Gastrocnemius medialis (tissue), 4 donors: ENCODE measurements at regions of chr22 and their contacts with region 1.

Region 1: GRCh38 chr22:19291580-19292457 is at the start of gene CLTCL1:
- DNase-seq: peak; percentile 81 to 84
- ATAC-seq: peak; percentile 0 to 3
- H3K4me3 ChIP-seq: peak within 1 kb of the TSS; percentile 86 to 98 (median 96)
- H3K27ac ChIP-seq: peak within 1 kb of the TSS; percentile 96 to 100 (median 97)
- H3K4me1 ChIP-seq: peaks cover 39 to 53% of the 10 kb centered on the region in 2 donors
- H3K27me3 ChIP-seq: no peaks in the 10 kb centered on the region
- CTCF ChIP-seq: no peak
- POLR2A ChIP-seq: peak; percentile 92 to 94
- total RNA-seq, gene CLTCL1: 111 to 311 (median 215) TPM

Region 2: GRCh38 chr22:18110194-18110953 is 1181.4 kb before region 1 on chr22 and contains the start of gene TUBA8:
- in situ Hi-C with region 1: no loop called
- intact Hi-C with region 1: loop called (anchors 10 kb)
- DNase-seq: peak; percentile 71 to 84
- ATAC-seq: peak; percentile 65 to 71
- H3K4me3 ChIP-seq: peak within 1 kb of the TSS; percentile 60 to 71 (median 64)
- H3K27ac ChIP-seq: peak within 1 kb of the TSS; percentile 87 to 97 (median 94)
- H3K4me1 ChIP-seq: peaks cover 46 to 50% of the 10 kb centered on the region in 2 donors
- H3K27me3 ChIP-seq: no peaks in the 10 kb centered on the region
- CTCF ChIP-seq: peak in 1 of 5 experiments; percentile 23
- POLR2A ChIP-seq: peak; percentile 93 to 95
- total RNA-seq, gene TUBA8: 57.8 to 114 (median 77.7) TPM

Region 3: DNA sequence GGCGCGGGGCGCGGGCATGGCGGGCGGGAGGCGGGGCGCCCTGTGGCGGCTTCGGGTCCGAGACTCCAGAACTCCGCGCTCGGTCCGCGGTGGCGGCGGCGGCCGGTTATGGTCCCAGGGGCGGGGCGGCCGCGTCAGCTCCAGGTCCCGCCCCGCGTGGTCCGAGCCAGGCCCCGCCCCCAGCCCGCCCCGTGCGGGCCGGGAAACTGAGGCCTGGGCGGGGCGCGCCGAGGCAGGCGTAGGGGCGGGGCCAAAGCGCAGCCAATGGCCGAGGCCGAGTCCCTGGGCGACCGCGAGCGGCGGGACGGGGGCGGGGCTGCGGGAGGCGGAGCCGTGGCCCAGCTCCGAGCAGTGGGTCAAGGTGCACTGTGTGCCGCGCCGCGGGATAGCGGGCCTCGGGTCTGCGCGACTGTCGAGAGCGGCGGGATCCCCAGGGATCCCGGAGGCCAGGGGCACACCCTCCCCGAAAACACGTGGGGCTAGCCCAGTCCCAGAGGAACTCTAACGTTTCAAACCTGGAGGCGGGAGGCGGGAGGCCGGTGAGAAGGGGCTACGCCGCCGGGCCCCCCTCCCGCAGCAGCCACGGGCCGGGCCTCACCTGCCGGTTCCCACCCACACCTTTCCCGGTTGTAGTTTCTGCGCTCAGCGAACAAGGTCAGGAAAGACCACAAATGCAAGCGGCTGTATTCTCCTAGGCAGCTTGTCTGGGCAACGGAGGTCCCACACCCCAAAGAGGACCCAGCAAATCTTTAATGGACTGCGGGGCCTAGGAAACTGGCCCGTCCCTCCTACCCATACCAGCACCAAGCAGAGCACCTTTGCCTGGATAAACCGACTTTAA is 112.9 kb before region 1 on chr22 and contains the start of gene SLC25A1:
- in situ Hi-C with region 1: no loop called
- intact Hi-C with region 1: loop called (anchors 2 kb)
- DNase-seq: peak; percentile 78 to 87
- ATAC-seq: peak; percentile 67 to 78
- H3K4me3 ChIP-seq: peak within 1 kb of the TSS; percentile 58 to 76 (median 70)
- H3K27ac ChIP-seq: peak within 1 kb of the TSS; percentile 76 to 97 (median 93)
- H3K4me1 ChIP-seq: peaks cover 18 to 28% of the 10 kb centered on the region in 2 donors
- H3K27me3 ChIP-seq: no peaks in the 10 kb centered on the region
- CTCF ChIP-seq: no peak
- POLR2A ChIP-seq: peak; percentile 49 to 57
- total RNA-seq, gene SLC25A1: 10.5 to 16.6 (median 13.5) TPM

Region 4: DNA sequence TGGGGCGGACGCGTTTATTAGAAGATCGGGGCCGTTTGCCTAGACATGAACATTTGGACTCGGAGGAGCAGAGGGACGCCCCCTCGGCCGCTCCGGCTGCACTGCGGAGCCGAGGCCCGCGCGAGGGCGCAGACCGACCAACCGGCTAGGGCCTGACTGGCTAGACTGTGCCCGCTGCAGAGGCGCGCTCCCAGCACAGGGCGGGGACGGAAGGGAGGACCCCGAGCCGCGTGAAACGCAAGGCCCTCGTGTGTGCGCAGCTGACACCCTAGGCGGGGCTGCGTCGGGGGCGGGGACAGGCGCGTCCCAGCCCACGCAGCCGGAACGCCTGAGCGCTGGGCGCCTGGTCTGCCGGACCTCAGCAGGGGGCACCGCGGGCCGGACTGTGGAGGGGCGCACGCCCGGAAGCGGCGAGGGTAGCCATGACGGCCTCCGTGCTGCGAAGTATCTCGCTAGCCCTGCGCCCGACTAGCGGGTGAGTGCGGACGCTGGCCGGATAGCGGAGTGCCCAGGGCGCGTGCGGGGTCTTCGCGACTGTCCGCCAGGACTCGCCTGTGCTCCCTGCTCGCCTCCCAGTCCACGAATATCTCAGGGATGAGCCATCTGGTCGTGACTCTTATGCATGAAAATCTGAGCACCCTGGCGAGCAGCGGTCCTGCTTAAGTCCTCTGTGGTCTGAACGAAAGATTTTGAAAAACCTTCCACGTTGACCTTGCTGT is 140.5 kb after region 1 on chr22 and contains the start of gene MRPL40:
- in situ Hi-C with region 1: no loop called
- intact Hi-C with region 1: loop called (anchors 2 kb)
- DNase-seq: peak; percentile 93
- ATAC-seq: peak; percentile 77 to 79
- H3K4me3 ChIP-seq: peak within 1 kb of the TSS; percentile 75 to 96 (median 88)
- H3K27ac ChIP-seq: peak within 1 kb of the TSS; percentile 91 to 100 (median 100)
- H3K4me1 ChIP-seq: peaks cover 31 to 37% of the 10 kb centered on the region in 2 donors
- H3K27me3 ChIP-seq: no peaks in the 10 kb centered on the region
- CTCF ChIP-seq: peak in 1 of 5 experiments; percentile 21
- POLR2A ChIP-seq: peak; percentile 91 to 95
- total RNA-seq, gene MRPL40: 53.8 to 75.1 (median 61.5) TPM

Region 5: DNA sequence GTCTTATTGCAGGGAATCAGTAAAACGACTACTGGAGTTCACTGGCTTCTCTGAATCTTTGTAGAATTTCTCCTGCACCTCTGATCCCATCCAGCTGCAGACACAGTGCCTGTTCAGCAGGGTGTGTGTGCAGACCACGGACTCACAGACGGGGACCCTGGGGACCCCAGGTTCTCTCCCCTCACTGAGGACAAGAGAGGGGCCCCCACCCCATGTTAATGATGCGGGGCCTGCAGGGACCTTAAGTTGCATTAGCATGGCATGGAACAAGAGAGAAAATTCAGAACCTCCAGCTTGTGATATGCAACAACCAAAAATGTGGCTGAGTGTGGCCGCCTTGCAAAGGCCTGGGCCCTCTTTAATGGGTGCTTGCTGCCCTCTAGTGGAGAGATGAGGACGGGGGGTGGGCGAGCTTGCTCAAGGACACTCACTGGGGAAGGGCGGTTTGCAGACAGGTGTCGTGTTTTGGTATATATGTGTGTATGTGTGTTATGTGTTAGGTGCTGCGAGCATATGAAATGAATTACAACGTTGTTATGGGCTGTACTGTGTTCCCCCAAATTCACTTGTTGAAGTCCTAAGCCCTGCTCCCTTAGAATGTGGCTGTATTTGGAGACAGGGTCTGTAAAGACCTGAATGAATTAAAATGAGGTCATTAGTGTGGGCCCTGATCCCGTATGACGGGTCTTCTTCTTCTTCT is 338.1 kb after region 1 on chr22:
- in situ Hi-C with region 1: no loop called
- intact Hi-C with region 1: loop called (anchors 5 kb)
- DNase-seq: peak; percentile 38 to 54
- ATAC-seq: peak; percentile 88 to 91
- H3K4me3 ChIP-seq: no peak overlapping the region
- H3K27ac ChIP-seq: no peak overlapping the region
- H3K4me1 ChIP-seq: no peaks in the 10 kb centered on the region
- H3K27me3 ChIP-seq: peaks cover 0 to 2% (median 0%) of the 10 kb centered on the region in 3 donors
- CTCF ChIP-seq: peak; percentile 85 to 94 (median 92)
- POLR2A ChIP-seq: no peak

Region 6: GRCh38 chr22:20550821-20551744 is 1259.3 kb after region 1 on chr22:
- in situ Hi-C with region 1: no loop called
- intact Hi-C with region 1: loop called (anchors 10 kb)
- DNase-seq: peak in 1 of 2 donors; percentile 56
- ATAC-seq: no peak
- H3K4me3 ChIP-seq: no peak overlapping the region
- H3K27ac ChIP-seq: peak overlapping the region; percentile 95 to 98 (median 97)
- H3K4me1 ChIP-seq: peaks cover 76 to 89% of the 10 kb centered on the region in 2 donors
- H3K27me3 ChIP-seq: no peaks in the 10 kb centered on the region
- CTCF ChIP-seq: no peak
- POLR2A ChIP-seq: no peak